AG04449 (cell line): ENCODE measurements at regions of chr17 and their contacts with region 1.

Region 1: GRCh38 chr17:40113110-40113906 is 8.5 kb upstream of the MSL1 start:
- DNase-seq: peak; percentile 77
- H3K4me3 ChIP-seq: peak overlapping the region; percentile 51
- CTCF ChIP-seq: peak; percentile 87

Region 2: GRCh38 chr17:39916918-39917317 is 196.4 kb before region 1 on chr17:
- CTCF ChIA-PET with region 1: no interaction called
- POLR2A ChIA-PET with region 1: no interaction called
- DNase-seq: no peak
- H3K4me3 ChIP-seq: no peak overlapping the region
- CTCF ChIP-seq: peak; percentile 16

Region 3: DNA sequence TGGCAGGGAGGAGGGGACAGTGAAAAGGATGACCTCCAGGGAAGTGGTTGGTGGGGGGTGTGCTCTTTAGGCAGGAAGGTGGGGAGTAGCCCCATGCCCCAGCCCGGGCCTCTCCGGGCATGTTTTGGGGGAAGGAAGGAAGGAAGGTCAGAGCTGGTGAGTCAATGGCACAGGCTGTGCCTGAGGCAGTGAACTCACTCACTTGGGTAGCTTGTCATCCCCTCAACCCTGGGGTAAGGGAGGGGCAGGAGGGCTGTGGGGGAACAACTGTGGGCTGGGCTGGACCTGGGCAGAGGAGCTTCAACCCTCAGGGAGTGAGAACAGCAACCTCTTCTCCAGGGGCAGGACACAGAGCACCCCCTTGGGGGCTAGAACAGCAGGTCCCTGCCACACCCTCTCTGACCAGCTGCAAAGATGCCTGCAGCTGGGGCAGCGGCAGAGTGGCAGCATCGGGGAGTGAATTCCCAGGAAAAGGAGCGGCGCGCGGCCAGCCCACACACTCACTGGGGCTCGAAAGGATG is 91.8 kb before region 1 on chr17:
- CTCF ChIA-PET with region 1: interaction called, 86 read pairs
- POLR2A ChIA-PET with region 1: no interaction called
- DNase-seq: no peak
- H3K4me3 ChIP-seq: no peak overlapping the region
- CTCF ChIP-seq: no peak

Region 4: DNA sequence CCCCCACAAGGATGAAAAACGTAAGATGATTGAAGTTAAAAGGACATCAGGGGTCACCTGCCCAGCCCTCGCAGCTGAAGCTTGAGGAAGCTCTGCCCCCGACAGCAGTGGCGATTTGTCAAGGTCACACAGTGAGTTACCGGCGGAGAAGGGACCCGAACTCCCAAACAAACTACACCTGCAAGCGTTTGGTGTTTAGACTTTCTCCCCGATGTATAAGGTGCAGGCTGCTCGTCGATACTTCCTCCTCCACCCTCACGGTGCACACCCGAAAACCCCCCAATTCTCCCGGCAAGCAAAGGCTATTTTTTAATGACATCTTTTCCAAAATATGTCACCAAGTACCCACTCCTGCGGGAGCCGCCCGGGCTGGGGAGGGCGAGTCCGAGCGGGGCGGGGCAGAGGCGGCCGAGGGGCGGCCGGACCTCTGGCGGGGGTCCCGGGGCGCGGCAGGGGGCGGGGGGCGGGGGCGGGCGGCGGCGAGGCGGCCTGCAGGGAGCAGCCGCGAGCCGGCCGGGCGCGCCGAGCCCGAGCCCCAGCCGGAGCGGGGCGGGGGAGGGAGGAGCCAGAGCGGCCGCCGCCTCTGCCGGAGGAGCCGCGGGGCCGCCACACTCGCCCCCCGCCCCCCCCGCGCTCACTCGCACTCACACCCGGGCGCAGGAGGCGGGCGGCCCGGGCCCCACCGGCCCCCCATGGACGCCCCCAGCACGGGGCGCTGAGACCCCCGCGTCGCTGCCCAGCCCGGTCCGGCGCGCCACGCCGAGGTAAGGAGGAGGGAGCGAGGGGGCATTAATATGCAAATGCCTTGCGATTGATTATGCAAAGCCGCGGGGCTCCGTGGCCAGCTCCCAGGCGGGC is 50.8 kb before region 1 on chr17 and contains the start of gene THRA:
- CTCF ChIA-PET with region 1: interaction called, 14 read pairs
- POLR2A ChIA-PET with region 1: no interaction called
- DNase-seq: no peak
- H3K4me3 ChIP-seq: peak within 1 kb of the TSS; percentile 90
- CTCF ChIP-seq: no peak

Region 5: DNA sequence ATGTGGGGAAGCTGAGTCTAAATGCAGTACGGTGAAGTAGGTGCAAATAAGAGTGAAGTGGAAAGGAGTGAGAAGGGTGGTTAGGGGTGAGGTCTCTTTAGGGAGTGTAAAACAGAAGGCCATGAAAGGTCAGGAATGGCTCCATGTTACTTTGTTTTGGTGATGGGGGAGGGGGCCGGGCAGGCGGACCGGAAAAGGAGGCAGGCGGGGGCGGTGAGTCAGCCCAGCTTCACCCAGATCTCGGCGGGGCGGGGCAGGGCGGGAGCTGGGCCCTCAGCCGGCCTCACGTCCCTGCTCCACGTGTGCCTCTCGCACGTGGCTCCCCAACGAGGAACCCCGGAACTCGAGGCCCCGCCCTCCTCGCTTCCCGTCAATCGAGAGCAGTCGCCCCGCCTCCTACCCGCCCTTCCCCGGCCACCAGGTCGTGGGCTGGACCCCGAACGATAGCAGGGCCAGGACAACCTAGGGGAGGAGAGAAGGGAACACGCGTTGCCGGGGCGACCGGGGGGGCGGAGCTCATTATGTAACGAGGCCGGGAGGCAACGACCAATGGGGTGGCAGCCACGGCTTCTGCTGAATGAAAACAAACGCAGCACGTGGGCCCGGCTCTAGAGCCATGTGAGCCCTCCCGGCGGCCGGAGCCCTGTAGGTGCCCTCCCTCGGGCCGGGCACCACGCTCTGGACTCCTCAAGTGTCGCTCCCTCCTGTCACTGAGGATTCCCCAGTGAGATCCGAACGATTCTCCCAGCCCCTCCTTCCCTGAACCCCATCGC is 14.3 kb before region 1 on chr17:
- CTCF ChIA-PET with region 1: interaction called, 129 read pairs
- POLR2A ChIA-PET with region 1: interaction called, 62 read pairs
- DNase-seq: peak; percentile 94
- H3K4me3 ChIP-seq: peak overlapping the region; percentile 87
- CTCF ChIP-seq: no peak

Region 6: DNA sequence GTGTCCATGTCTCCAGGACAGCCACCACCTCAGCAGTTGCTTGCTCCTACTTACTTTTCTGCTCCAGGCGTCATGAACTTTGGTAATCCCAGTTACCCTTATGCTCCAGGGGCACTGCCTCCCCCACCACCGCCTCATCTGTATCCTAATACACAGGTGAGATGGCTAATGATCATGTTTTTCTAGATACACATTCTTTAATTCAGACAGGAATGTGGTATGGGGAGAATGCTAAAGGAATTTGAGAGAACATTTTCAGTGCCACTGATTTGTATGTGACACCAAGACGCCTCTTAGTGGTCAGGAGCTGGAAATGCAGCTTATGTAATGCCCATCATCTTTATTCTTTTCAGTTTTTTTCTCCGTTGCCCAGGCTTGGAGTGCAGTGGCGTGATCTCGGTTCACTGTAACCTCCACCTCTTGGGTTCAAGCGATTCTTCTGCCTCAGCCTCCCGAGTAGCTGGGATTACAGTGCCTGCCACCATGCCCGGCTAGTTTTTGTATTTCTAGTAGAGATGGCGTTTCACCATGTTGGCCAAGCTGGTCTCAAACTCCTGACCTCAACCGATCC is 55.0 kb after region 1 on chr17:
- CTCF ChIA-PET with region 1: interaction called, 91 read pairs
- POLR2A ChIA-PET with region 1: interaction called, 4 read pairs
- DNase-seq: peak; percentile 26
- H3K4me3 ChIP-seq: no peak overlapping the region
- CTCF ChIP-seq: peak; percentile 55

Region 7: GRCh38 chr17:40203131-40203530 is 89.8 kb after region 1 on chr17:
- CTCF ChIA-PET with region 1: interaction called, 15 read pairs
- POLR2A ChIA-PET with region 1: no interaction called
- DNase-seq: no peak
- H3K4me3 ChIP-seq: no peak overlapping the region
- CTCF ChIP-seq: no peak

Region 8: DNA sequence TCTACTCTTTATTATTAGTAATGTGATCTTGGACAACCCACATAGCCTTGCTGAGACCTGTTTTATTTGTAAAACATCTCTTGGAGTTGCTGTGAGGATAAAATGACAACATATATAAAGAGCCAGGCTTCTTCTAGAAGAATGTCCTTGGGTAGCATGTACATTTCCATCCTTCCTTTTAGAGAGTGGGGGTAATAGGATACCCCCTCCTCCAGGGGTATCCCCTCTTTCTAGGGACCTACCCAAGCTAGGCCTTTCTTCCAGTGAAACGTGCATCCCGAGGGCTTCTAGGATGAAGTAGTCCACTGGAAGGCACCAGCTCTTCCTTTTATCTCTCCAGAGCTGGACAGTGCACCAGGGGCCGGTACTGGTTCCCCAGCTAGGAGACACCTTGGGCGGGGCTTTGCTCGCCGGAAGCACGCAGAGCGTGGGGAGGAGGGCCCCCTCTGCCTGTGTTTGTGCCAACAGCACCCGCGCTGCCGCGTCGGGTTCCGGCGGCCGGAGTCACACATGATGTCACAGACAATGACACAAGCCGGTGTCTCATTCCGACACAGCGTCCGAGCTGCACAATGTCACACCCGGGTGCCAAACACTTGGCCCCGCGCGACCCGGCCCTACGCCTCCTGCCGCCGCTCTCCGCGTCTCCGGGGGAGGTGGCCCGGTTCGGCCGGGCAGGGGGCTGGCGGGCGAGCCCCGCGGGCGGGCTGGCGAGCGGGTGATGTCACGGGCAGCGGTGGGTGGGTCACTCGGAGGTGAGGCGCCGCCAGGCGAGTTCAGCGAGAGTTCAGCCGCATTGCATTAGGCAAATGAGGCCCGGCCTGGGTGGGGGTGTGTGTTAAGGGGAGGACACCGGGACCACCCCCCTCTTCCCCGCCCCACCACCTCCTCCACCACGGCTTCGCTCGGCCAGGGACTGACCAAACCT is 227.8 kb after region 1 on chr17:
- CTCF ChIA-PET with region 1: no interaction called
- POLR2A ChIA-PET with region 1: no interaction called
- DNase-seq: no peak
- H3K4me3 ChIP-seq: peak overlapping the region; percentile 62
- CTCF ChIP-seq: no peak